MCF 10A (cell line): ENCODE measurements at regions of chr2 and their contacts with region 1.

Region 1: DNA sequence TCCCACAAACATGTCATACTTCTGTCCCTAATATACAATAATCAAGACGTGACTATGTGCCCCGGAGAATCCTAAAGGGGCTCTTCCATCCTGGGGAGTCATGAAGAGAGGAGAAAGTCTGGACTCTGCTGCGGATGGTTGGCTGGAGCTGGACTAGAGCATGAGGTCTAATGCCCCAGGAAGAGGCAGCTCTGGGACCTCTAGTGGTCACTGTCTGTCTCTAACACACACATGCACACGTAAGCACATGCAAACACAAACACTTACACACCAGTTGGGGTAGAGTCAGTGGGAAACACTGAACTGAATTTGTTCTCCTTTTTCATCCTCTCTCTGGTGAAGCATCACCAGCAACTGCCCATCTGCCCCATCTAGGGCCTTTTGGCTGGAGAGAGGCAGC is 271.6 kb downstream of the TDRD15 start:
- DNase-seq: peak; percentile 9
- H3K4me3 Mint-ChIP-seq: no peak overlapping the region
- H3K27ac Mint-ChIP-seq: no peak overlapping the region
- H3K4me1 Mint-ChIP-seq: peaks cover 13% of the 10 kb centered on the region
- H3K27me3 Mint-ChIP-seq: peaks cover 11% of the 10 kb centered on the region
- CTCF ChIP-seq: peak; percentile 16

Region 2: GRCh38 chr2:21175895-21176646 is 219.3 kb before region 1 on chr2:
- CTCF ChIA-PET with region 1: interaction called, 3 read pairs
- POLR2A ChIA-PET with region 1: no interaction called
- intact Hi-C with region 1: loop called (anchors 5 kb)
- DNase-seq: no peak
- H3K4me3 Mint-ChIP-seq: no peak overlapping the region
- H3K27ac Mint-ChIP-seq: no peak overlapping the region
- H3K4me1 Mint-ChIP-seq: no peaks in the 10 kb centered on the region
- H3K27me3 Mint-ChIP-seq: peaks cover 71% of the 10 kb centered on the region
- CTCF ChIP-seq: peak; percentile 37

Region 3: GRCh38 chr2:21467910-21468309 is 72.5 kb after region 1 on chr2:
- CTCF ChIA-PET with region 1: no interaction called
- POLR2A ChIA-PET with region 1: no interaction called
- intact Hi-C with region 1: no loop called
- DNase-seq: no peak
- H3K4me3 Mint-ChIP-seq: no peak overlapping the region
- H3K27ac Mint-ChIP-seq: no peak overlapping the region
- H3K4me1 Mint-ChIP-seq: peaks cover 14% of the 10 kb centered on the region
- H3K27me3 Mint-ChIP-seq: no peaks in the 10 kb centered on the region
- CTCF ChIP-seq: no peak

Region 4: GRCh38 chr2:21668078-21668710 is 272.8 kb after region 1 on chr2:
- CTCF ChIA-PET with region 1: no interaction called
- POLR2A ChIA-PET with region 1: no interaction called
- intact Hi-C with region 1: no loop called
- DNase-seq: no peak
- H3K4me3 Mint-ChIP-seq: no peak overlapping the region
- H3K27ac Mint-ChIP-seq: no peak overlapping the region
- H3K4me1 Mint-ChIP-seq: no peaks in the 10 kb centered on the region
- H3K27me3 Mint-ChIP-seq: no peaks in the 10 kb centered on the region
- CTCF ChIP-seq: no peak